ENCODE measurements at regions of chr17 and their contacts with region 1.

Region 1: DNA sequence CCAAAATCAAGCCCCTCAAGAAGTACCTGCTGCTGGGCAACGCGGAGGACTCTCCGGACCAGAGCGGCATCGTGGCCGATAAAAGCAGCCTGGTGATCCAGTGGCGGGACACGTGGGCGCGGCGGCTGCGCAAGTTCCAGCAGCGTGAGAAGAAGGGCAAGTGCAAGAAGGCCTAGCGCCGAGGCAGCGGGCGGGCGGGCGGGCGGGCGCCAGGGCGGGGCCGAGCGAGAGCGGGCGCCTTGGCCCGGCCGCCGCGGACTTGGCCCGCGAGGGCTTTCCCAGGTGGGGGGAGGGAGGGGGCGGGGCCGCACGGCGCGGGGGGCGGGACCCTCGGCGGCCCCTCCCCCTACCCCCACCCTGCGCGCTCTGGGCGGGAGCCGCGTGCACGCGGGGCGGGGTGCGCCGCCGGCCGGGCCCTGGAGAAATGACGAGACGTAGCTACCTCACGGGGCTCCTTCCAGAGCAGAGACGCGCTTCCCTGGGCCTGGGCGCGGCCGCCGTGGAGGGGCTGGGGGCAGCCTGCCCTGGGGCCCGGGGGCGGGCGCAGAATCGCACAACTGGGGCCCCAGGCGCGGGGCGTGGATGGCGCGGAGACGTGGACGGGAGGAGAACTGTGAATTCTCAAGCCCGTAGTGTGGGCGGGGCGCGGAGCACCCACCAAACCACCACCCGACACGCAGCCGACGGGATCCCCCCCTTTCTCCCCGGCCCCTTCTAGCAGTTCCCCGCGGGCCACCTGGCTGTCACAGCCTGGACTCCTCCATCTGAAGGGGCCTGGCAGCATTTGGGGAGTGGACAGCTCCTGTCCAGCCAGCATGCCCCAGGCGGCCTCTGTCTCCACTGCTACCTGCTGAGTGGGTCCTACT is 218.7 kb downstream of the NTN1 start:
- DNase-seq: peak; percentile 87 to 95
- H3K4me3 ChIP-seq: peak overlapping the region; percentile 57 to 80
- H3K27ac ChIP-seq: peak overlapping the region; percentile 98 to 100
- H3K4me1 ChIP-seq: peaks cover 0 to 82% (median 61%) of the 10 kb centered on the region in 4 donors
- H3K27me3 ChIP-seq: no peaks in the 10 kb centered on the region
- CTCF ChIP-seq: no peak

Region 2: GRCh38 chr17:8935191-8935590 is 304.8 kb before region 1 on chr17:
- intact Hi-C with region 1: no loop called
- DNase-seq: no peak
- H3K4me3 ChIP-seq: no peak overlapping the region
- H3K27ac ChIP-seq: no peak overlapping the region
- H3K4me1 ChIP-seq: no peaks in the 10 kb centered on the region
- H3K27me3 ChIP-seq: peaks cover 0 to 20% of the 10 kb centered on the region in 2 donors
- CTCF ChIP-seq: no peak

Region 3: DNA sequence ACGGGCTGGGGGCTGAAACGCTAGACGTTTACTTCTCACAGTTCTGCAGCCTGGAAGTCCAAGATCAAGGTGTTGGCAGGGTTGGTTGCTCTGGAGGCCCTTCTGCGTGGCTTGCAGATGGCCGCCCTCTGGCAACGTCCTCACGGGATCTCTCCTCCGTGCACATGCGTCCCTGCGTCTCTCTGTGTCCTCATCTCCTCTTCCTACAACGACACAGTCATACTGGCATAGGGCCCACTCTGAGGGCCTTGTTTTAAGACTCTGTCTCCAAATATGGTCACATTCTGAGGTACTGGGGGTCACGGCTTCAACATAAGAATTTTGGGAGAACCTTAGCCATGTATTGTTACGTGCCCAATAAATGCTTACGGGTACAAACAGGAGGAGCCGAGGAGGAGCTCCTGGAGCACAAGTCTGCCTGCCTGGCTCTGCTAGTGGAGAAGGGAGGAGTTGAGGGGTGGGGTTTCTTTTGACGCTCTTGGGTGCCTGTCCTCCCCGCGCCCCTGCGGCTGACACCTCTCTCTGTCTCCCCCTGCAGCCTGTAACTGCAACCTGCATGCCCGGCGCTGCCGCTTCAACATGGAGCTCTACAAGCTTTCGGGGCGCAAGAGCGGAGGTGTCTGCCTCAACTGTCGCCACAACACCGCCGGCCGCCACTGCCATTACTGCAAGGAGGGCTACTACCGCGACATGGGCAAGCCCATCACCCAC is 77.6 kb before region 1 on chr17:
- intact Hi-C with region 1: loop called (anchors 5 kb)
- DNase-seq: peak; percentile 84 to 97
- H3K4me3 ChIP-seq: peak overlapping the region; percentile 47 to 52
- H3K27ac ChIP-seq: peak overlapping the region; percentile 84 to 96
- H3K4me1 ChIP-seq: peaks cover 0 to 51% (median 33%) of the 10 kb centered on the region in 4 donors
- H3K27me3 ChIP-seq: no peaks in the 10 kb centered on the region
- CTCF ChIP-seq: peak; percentile 51 to 68

Region 4: DNA sequence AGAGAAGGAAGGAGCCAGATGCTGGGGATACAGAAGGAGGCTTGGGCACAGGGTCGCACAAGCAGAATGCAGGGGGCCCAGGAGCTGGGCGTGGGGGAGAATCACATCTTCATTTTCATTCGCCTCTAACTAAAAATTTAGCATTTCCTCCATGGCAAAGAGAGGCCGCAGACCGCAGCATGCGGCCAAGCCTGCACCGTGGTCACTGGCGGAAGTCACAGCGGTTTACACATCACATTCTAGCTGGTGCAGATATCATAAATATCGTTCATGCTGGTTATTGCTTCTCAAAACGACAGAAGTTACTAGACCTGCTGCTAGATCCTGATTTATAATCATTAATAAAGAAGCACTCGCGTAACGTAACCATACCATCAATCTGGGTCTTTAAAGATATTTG is 56.7 kb before region 1 on chr17:
- intact Hi-C with region 1: no loop called
- DNase-seq: no peak
- H3K4me3 ChIP-seq: no peak overlapping the region
- H3K27ac ChIP-seq: no peak overlapping the region
- H3K4me1 ChIP-seq: peaks cover 0 to 12% (median 8%) of the 10 kb centered on the region in 4 donors
- H3K27me3 ChIP-seq: no peaks in the 10 kb centered on the region
- CTCF ChIP-seq: no peak

Region 5: GRCh38 chr17:9291912-9292560 is 52.0 kb after region 1 on chr17:
- intact Hi-C with region 1: loop called (anchors 2 kb)
- DNase-seq: peak; percentile 57 to 82
- H3K4me3 ChIP-seq: no peak overlapping the region
- H3K27ac ChIP-seq: peak overlapping the region; percentile 78 to 82
- H3K4me1 ChIP-seq: peaks cover 0 to 19% (median 10%) of the 10 kb centered on the region in 4 donors
- H3K27me3 ChIP-seq: no peaks in the 10 kb centered on the region
- CTCF ChIP-seq: peak; percentile 78 to 88

Region 6: DNA sequence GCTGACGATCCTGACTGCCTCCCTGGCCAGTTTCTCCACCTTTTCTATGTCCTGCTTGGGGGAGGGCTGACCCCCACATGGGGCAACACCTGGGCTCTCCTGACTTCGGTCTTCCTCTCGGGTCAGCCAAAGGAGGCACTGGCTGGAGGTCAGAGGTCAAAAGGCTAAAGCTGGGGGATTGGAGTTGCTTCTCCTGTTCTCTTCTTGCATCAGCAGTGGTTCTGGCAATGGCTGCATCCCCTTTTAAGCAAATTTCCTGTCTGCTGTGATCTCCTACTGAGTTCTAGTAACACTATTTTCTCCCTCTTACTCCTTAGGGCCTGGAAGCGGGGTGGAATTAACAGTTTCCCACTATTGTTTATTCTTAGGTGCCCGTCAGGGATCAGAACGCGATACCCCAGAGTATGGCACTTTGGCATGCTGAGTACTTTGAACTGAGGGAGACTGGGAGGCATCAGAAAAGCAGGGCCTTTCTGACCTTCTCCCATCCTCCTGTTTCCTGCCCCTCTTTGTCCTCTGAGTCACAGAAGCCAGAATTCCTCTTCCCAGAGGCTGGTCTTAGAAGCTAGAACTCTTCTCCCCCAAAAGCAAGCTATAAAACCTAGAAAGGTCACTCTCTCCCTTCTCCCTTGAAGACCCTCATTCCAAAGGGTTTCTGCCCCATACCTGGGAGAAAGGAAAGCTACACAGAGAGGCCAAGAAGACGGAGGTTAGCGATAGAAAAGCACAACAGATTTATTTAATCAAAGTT is 67.4 kb after region 1 on chr17:
- intact Hi-C with region 1: no loop called
- DNase-seq: no peak
- H3K4me3 ChIP-seq: no peak overlapping the region
- H3K27ac ChIP-seq: no peak overlapping the region
- H3K4me1 ChIP-seq: no peaks in the 10 kb centered on the region
- H3K27me3 ChIP-seq: no peaks in the 10 kb centered on the region
- CTCF ChIP-seq: no peak

Measured in tibial artery (tissue), 4 donors.